ENCODE measurements at regions of chr7 and their contacts with region 1.

Region 1: GRCh38 chr7:140196361-140197217 is 19.8 kb upstream of the KDM7A start:
- DNase-seq: peak; percentile 34
- ATAC-seq: no peak; the same call in 1 of the 2 replicates
- H3K4me3 ChIP-seq: no peak overlapping the region
- H3K27ac ChIP-seq: no peak overlapping the region
- H3K4me1 ChIP-seq: no peaks in the 10 kb centered on the region
- H3K27me3 ChIP-seq: peaks cover 16% of the 10 kb centered on the region
- CTCF ChIP-seq: no peak
- POLR2A ChIP-seq: no peak
- RAD21 ChIP-seq: no peak

Region 2: GRCh38 chr7:140304191-140304799 is 107.7 kb after region 1 on chr7:
- CTCF ChIA-PET with region 1: no interaction called
- POLR2A ChIA-PET with region 1: no interaction called
- dilution Hi-C with region 1: no loop called
- in situ Hi-C with region 1: loop called (anchors 10 kb)
- intact Hi-C with region 1: no loop called
- DNase-seq: peak; percentile 16
- ATAC-seq: peak; percentile 60; the same call in 1 of the 2 replicates
- H3K4me3 ChIP-seq: no peak overlapping the region
- H3K27ac ChIP-seq: no peak overlapping the region
- H3K4me1 ChIP-seq: no peaks in the 10 kb centered on the region
- H3K27me3 ChIP-seq: peaks cover 12% of the 10 kb centered on the region
- CTCF ChIP-seq: peak; percentile 36; the same call in 1 of the 2 replicates
- POLR2A ChIP-seq: no peak
- RAD21 ChIP-seq: peak; percentile 33; the same call in 1 of the 2 replicates

Measured in IMR-90 (cell line).